ENCODE measurements at regions of chr16 and their contacts with region 1.

Region 1: GRCh38 chr16:80580109-80580832 is 39.5 kb downstream of the DYNLRB2 start:
- DNase-seq: no peak
- H3K4me3 ChIP-seq: no peak overlapping the region
- H3K27ac ChIP-seq: no peak overlapping the region
- H3K4me1 ChIP-seq: no peaks in the 10 kb centered on the region
- H3K27me3 ChIP-seq: no peaks in the 10 kb centered on the region
- CTCF ChIP-seq: no peak
- EP300 ChIP-seq: no peak
- POLR2A ChIP-seq: no peak

Region 2: GRCh38 chr16:80631581-80631980 is 51.3 kb after region 1 on chr16:
- intact Hi-C with region 1: no loop called
- DNase-seq: no peak
- H3K4me3 ChIP-seq: no peak overlapping the region
- H3K27ac ChIP-seq: no peak overlapping the region
- H3K4me1 ChIP-seq: no peaks in the 10 kb centered on the region
- H3K27me3 ChIP-seq: no peaks in the 10 kb centered on the region
- CTCF ChIP-seq: no peak
- EP300 ChIP-seq: no peak
- POLR2A ChIP-seq: no peak

Region 3: DNA sequence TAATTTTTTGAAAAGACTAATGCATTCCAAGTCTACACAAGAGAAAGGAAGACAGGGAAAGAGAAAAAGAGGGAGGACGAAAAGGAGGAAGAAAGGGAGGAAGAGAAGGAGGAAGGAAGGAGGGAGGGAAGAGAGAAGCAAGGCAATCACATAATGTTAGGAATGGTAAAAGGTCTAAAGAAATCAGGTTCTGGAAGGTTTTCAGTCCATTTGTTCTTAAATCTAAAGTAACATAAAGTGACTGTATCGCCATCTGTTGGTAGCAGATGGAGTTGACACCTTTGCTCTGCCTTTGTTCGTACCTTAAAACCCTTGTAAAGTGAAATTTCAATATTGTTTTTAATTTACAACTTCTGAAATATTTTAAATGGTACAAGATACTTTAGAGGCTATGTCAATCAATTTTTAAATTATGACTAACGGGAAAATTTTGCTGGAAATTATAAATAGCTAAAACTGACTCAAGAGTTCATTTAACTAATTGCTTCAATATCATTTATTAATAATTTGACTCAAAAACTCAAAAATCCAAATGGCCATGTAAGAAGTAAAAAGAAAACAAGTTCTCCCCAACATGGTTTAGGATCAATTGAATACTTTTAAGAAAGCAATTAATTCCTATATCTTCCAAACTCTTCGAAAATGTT is 244.6 kb after region 1 on chr16:
- intact Hi-C with region 1: loop called (anchors 10 kb)
- DNase-seq: no peak
- H3K4me3 ChIP-seq: no peak overlapping the region
- H3K27ac ChIP-seq: no peak overlapping the region
- H3K4me1 ChIP-seq: no peaks in the 10 kb centered on the region
- H3K27me3 ChIP-seq: no peaks in the 10 kb centered on the region
- CTCF ChIP-seq: peak in 3 of 4 experiments; percentile 32 to 56 (median 42)
- EP300 ChIP-seq: no peak
- POLR2A ChIP-seq: no peak